ENCODE measurements at regions of chr11 and their contacts with region 1.

Region 1: GRCh38 chr11:70641369-70641768 is 243.0 kb downstream of the CTTN start:
- DNase-seq: no peak
- ATAC-seq: no peak
- H3K4me3 ChIP-seq: no peak overlapping the region
- H3K27ac ChIP-seq: no peak overlapping the region
- H3K4me1 ChIP-seq: no peaks in the 10 kb centered on the region
- H3K27me3 ChIP-seq: peaks cover 4% of the 10 kb centered on the region; the same call in 1 of the 2 replicates
- CTCF ChIP-seq: no peak

Region 2: DNA sequence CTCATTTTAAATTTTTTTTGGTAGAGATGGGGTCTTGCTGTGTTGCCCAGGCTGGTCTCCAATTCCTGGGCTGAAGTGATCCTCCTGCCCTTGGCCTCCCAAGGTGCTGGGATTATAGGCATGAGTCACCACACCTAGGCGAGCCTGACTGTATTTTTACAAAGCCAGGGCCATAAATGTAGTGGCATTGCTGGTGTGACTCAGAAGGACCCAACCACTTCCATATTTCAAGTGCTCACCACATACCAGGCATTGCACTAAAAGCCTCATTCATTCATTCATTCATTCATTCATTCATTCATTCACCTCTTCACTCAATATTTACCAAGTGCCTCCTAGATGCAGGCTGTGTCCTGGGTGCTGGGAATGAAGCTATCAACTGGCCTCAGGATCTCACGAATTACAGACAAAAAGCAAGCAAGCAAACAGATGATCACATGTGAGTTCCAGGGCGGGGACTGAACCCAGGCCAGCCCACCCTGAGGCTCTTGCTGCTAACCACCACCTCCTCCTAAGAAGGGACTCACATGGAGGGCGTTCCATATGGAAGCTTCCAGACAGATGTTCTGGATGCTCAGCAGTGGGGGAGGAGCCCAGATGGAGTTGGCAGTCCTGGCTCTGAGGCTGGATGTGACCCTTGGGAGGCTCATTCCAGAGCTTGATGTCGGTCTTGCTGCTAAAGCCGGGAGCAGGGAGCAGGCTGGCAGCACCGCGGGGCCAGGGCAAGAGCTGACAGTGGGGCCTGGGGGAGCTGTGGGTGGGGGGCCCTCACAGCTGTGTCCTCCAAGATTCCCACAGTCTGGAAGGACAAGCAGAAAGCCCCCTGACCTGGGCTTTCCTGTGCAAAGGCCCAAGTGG is 84.3 kb before region 1 on chr11:
- CTCF ChIA-PET with region 1: no interaction called
- POLR2A ChIA-PET with region 1: no interaction called
- in situ Hi-C with region 1: no loop called
- intact Hi-C with region 1: no loop called
- DNase-seq: peak; percentile 56
- ATAC-seq: peak; percentile 91
- H3K4me3 ChIP-seq: no peak overlapping the region
- H3K27ac ChIP-seq: no peak overlapping the region
- H3K4me1 ChIP-seq: peaks cover 11% of the 10 kb centered on the region
- H3K27me3 ChIP-seq: no peaks in the 10 kb centered on the region; the same call in 1 of the 2 replicates
- CTCF ChIP-seq: no peak

Region 3: GRCh38 chr11:70625582-70626518 is 15.5 kb before region 1 on chr11:
- CTCF ChIA-PET with region 1: interaction called, 4 read pairs
- POLR2A ChIA-PET with region 1: interaction called, 11 read pairs
- in situ Hi-C with region 1: no loop called
- intact Hi-C with region 1: no loop called
- DNase-seq: no peak
- ATAC-seq: no peak
- H3K4me3 ChIP-seq: no peak overlapping the region
- H3K27ac ChIP-seq: no peak overlapping the region
- H3K4me1 ChIP-seq: no peaks in the 10 kb centered on the region
- H3K27me3 ChIP-seq: peaks cover 2% of the 10 kb centered on the region; the same call in 1 of the 2 replicates
- CTCF ChIP-seq: no peak